Heart left ventricle (tissue), 16 donors: ENCODE measurements at regions of chr4 and their contacts with region 1.

Region 1: DNA sequence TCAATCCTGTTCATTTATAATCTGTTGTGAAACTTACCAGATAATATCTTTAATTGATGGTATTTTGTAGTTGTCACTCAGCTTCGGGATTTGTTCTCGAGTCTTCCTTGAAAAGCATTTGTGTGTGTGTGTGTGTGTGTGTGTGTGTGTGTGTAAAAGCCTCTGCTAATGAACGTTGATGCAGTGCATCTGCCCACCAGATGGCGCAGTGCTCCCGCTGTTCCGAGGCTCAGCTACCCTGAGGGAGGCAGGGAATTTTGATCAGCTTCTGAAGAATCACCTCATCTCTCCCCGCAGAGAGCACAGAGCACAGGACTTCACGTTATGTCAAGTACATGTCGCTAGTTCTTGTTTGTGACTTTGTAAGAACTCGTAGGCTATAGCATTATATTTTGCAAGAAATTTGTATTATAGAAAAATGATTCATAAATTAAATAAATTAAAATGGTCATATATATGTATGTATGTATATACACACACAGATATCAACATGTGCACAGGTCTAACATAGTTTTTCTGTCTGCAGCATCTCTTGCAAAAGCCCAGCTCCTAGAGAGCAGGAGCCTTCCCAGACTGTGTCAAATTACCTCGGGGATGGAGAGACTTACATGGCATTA is 316.7 kb upstream of the IGFBP7 start:
- DNase-seq: peak; percentile 37 to 73 (median 54)
- ATAC-seq: peak in 3 of 4 donors; percentile 77 to 83 (median 83)
- H3K4me3 ChIP-seq: no peak overlapping the region
- H3K27ac ChIP-seq: no peak overlapping the region
- H3K4me1 ChIP-seq: no peaks in the 10 kb centered on the region
- H3K27me3 ChIP-seq: peaks cover 0 to 7% (median 0%) of the 10 kb centered on the region in 9 donors
- CTCF ChIP-seq: peak; percentile 22 to 65 (median 57)
- POLR2A ChIP-seq: no peak

Region 2: GRCh38 chr4:58061970-58062369 is 635.1 kb after region 1 on chr4:
- intact Hi-C with region 1: loop called in 1 of 10 experiments (anchors 5 kb)
- DNase-seq: no peak
- ATAC-seq: no peak
- H3K4me3 ChIP-seq: no peak overlapping the region
- H3K27ac ChIP-seq: no peak overlapping the region
- H3K4me1 ChIP-seq: no peaks in the 10 kb centered on the region
- H3K27me3 ChIP-seq: no peaks in the 10 kb centered on the region
- CTCF ChIP-seq: peak in 7 of 12 donors; percentile 6 to 39 (median 20)
- POLR2A ChIP-seq: no peak

Region 3: DNA sequence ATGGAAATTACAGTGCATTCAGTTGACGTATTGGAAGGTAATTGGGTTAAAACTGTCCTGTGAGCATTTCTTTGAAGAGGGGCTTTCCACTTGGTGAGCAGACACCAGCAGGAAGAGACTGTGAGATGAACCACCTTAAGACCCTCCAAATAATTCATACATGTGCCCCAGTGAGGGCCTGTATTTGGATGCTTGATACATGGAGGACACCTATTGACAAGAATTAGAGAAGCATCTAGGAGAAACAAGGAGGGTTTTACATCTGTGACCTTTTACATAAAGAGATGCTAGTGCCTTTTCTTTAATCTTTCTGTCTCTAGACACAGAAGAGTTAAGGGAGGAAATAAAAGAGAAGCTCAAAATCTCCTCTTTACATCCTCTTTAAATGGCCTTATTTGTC is 798.6 kb after region 1 on chr4:
- intact Hi-C with region 1: loop called in 1 of 10 experiments (anchors 10 kb)
- DNase-seq: no peak
- ATAC-seq: no peak
- H3K4me3 ChIP-seq: no peak overlapping the region
- H3K27ac ChIP-seq: no peak overlapping the region
- H3K4me1 ChIP-seq: no peaks in the 10 kb centered on the region
- H3K27me3 ChIP-seq: no peaks in the 10 kb centered on the region
- CTCF ChIP-seq: peak in 3 of 12 donors; percentile 8 to 14 (median 11)
- POLR2A ChIP-seq: no peak